GM10248 (cell line): ENCODE measurements at regions of chr11 and their contacts with region 1.

Region 1: DNA sequence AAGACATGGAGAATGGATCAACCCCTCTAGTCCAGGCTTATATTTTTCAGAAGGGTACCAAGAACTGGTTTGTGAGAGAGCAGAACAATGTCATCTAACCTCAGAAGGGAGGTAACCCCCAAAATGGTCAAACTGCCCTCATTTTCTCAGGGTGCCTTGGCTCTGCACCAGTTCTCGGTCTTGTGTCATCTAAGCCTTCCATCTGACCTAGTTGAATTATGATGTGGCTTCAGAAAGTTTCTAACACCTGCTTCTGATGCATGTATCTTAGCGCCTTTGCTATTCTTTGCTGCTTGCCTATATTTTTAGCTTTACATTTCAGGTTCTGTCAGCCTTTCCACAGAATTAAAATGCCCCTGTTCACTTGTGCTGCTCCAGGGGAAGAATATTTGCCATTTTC is 91.7 kb upstream of the E2F8 start:
- DNase-seq: peak; percentile 27
- CTCF ChIP-seq: no peak

Region 2: GRCh38 chr11:19344751-19345518 is 12.5 kb after region 1 on chr11:
- CTCF ChIA-PET with region 1: interaction called, 10 read pairs
- POLR2A ChIA-PET with region 1: no interaction called
- DNase-seq: peak; percentile 57
- CTCF ChIP-seq: no peak